Activated T-helper 1 cell treated with anti-CD3 and anti-CD28 coated beads, Interleukin-12 subunit alpha, Interleukin-12 subunit beta, Interleukin-2, Interleukin-4 antibody, amounts not matched to agents 30 ng/mL and 10 ng/mL and 1 ng/mL, durations not matched to agents 14 hours and 24 hours and 36 hours (primary cell): ENCODE measurements at regions of chr14 and their contacts with region 1.

Region 1: GRCh38 chr14:49620182-49621113 is at the starts of genes MGAT2 and RPL36AL:
- DNase-seq: peak; percentile 96
- H3K4me3 Mint-ChIP-seq: peak within 1 kb of the TSS; percentile 98
- H3K27ac Mint-ChIP-seq: peak within 1 kb of the TSS; percentile 98
- H3K4me1 Mint-ChIP-seq: peaks cover 53% of the 10 kb centered on the region
- H3K27me3 Mint-ChIP-seq: peaks cover 2% of the 10 kb centered on the region
- total RNA-seq, gene MGAT2: 57.5 and 58.3 TPM in 2 replicates
- total RNA-seq, gene RPL36AL: 224 and 237 TPM in 2 replicates

Region 2: DNA sequence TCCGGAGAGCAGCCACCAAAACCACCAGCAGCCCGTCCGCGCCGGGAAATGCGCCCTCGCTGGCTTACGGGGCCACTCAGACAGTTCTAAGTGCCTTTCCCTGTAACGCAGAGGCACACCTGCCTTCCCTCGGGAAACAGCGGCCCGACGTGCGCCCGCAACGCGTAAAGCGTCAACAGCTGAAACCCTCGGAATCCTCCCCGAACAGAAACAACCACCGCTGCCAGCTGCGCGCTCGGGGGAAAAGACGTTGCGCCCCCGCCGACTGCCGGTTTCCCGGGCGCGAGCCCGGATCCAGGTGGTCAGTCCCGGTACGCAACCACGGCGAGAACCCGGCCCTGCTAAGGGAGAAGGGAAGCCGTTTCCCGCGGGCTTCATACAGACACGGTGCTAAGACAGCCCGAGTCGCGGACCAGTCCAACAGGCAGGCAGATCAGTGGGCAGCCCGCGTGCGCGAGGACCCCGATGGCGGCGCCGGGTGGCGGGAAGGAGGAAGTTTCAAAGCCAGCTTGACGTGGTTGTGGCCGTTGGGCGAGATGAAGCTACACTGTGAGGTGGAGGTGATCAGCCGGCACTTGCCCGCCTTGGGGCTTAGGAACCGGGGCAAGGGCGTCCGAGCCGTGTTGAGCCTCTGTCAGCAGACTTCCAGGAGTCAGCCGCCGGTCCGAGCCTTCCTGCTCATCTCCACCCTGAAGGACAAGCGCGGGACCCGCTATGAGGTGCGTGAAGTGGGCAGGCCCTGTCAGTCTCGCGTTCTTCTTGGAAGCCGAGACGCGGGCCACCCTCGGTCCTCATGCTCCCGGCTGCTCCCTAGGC is 21.8 kb before region 1 on chr14 and contains the start of gene LRR1:
- intact Hi-C with region 1: loop called (anchors 1 kb)
- DNase-seq: peak; percentile 82
- H3K4me3 Mint-ChIP-seq: peak within 1 kb of the TSS; percentile 92
- H3K27ac Mint-ChIP-seq: peak within 1 kb of the TSS; percentile 95
- H3K4me1 Mint-ChIP-seq: peaks cover 44% of the 10 kb centered on the region
- H3K27me3 Mint-ChIP-seq: no peaks in the 10 kb centered on the region
- total RNA-seq, gene LRR1: 45.1 and 46.7 TPM in 2 replicates

Region 3: DNA sequence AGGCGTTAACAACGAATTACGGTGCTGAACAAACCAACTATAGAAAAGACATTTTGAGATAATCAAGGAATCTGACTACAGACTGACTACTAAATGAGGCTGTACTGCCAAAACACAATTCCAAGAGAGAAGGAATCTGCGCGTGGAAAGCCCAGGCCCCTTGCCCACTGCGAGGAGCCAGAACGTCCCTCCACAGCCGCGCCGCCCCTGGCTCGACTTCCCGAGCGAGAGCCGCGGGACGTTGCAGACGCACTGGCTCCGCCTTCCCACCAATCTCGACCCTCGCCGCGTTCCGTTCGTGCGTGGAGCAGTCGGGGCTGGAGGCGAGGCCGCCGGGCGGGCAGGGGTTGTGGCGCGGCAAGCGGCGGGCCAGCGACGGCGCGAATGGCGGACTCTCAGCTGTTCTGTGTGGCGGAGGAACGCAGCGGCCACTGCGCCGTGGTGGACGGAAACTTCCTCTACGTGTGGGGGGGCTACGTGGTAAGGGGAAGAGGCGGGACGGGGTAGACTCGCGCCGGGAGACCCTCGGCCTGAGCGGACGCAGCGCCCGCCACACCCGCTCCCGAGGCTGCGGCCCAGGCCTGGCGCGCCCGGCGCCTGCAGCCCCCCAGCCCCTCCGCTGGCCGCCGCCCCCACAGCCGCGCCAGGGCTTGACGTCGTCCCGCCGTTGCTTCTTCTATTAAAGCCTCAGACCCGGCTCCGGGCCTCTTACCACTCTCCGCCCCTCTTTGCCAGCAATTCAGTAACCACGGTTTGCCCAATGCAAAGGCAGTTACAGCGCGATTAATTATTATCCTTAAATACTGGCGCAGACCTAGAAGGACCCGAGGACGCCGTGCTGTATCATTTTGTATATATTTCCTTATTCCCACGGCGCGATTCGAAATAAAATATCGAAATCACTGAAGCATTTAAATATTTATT is 72.6 kb after region 1 on chr14 and contains the start of gene KLHDC1:
- intact Hi-C with region 1: loop called (anchors 1 kb)
- DNase-seq: peak; percentile 74
- H3K4me3 Mint-ChIP-seq: peak within 1 kb of the TSS; percentile 87
- H3K27ac Mint-ChIP-seq: peak within 1 kb of the TSS; percentile 94
- H3K4me1 Mint-ChIP-seq: peaks cover 19% of the 10 kb centered on the region
- H3K27me3 Mint-ChIP-seq: peaks cover 1% of the 10 kb centered on the region
- total RNA-seq, gene KLHDC1: 0.93 and 1.9 TPM in 2 replicates